WTC11 (cell line): ENCODE measurements at regions of chr3 and their contacts with region 1.

Region 1: DNA sequence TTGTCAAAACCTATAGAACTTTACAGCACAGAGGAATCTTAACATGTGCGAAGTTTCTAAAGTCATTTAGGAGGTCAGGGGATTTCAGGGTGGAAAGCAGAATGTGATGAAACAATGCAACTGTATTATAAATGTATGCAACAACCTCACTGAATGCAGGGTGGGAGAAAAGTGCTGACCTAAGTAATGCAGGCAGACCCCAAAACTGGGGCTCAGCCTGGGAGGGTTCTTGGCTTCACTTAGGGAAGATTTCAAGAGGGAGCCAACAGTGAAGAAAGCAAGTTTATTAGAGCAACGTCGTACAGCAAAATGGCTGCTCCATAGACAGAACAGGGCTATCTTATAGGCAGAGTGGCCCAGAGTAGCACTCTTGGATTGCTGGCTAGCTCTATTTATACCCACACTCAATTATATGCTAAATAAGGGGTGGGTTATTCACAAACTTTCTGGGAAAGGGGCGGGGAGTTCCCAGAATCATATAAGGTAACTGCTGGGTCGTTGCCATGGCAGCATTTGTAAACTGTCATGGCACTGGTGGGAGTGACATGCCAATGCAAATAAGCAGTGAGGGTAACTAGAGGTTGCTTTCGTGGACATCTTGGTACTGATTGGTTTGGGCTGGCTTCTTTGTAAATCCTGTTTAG is 14.2 kb upstream of the CAND2 start:
- DNase-seq: peak; percentile 61
- ATAC-seq: peak; percentile 93
- H3K4me3 Mint-ChIP-seq: no peak overlapping the region
- H3K27ac Mint-ChIP-seq: no peak overlapping the region
- H3K4me1 Mint-ChIP-seq: peaks cover 22% of the 10 kb centered on the region
- H3K27me3 Mint-ChIP-seq: no peaks in the 10 kb centered on the region; the same call in none of the 2 replicates
- CTCF ChIP-seq: no peak

Region 2: GRCh38 chr3:12536423-12536822 is 245.9 kb before region 1 on chr3:
- CTCF ChIA-PET with region 1: no interaction called
- POLR2A ChIA-PET with region 1: no interaction called
- DNase-seq: no peak
- ATAC-seq: no peak
- H3K4me3 Mint-ChIP-seq: no peak overlapping the region
- H3K27ac Mint-ChIP-seq: no peak overlapping the region
- H3K4me1 Mint-ChIP-seq: 0 out of 2 replicates have a peak, but pooled peaks cover 3% of the 10 kb centered on the region
- H3K27me3 Mint-ChIP-seq: no peaks in the 10 kb centered on the region
- CTCF ChIP-seq: no peak

Region 3: DNA sequence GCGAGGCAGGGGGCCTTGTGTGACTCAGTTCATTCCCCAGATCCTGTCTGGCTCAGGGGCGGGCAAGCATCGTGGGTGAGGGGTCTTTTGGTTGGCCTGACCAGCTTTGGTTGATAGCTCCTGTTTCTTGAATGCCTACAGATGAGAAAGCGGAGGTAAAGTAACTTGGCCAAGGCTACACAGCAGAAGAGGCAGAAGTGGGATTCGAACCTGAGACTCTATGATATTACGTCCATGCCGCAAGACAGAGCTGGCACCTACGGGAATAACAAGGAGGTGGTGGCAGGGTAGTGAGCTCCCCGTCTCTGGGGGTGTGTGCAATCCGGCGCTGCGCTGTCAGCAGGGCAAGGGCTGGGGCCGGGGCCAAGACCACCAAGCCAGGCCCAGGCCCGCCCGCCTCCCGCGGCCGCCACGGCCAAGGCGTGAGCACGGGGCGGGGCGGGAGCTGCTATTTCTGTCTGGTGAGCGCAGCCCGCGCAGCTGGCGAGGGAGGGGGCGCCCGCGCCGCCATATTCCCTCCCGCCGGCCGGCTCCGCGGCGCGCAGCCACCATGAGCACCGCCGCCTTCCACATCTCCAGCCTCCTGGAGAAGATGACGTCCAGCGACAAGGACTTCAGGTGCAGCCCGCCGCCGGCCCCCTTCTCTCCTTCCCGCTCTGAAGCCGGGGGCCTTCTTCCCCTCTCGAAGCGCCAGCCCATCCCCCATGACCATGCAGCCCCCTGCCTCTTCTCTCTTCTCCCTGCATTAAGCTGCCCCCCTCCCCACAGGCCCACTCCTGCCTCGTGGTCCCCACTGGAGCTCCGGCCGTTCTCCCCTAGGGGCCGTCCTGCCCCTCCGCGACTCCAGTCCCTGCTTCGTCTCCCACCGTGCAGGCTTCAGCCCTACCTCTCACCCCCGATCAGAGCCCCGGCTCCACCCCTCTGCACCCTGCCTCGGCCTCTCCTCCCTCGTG is 14.2 kb after region 1 on chr3 and contains the start of gene CAND2:
- CTCF ChIA-PET with region 1: interaction called, 16 read pairs
- POLR2A ChIA-PET with region 1: no interaction called
- DNase-seq: peak; percentile 48
- ATAC-seq: peak; percentile 85
- H3K4me3 Mint-ChIP-seq: peak within 1 kb of the TSS; percentile 83
- H3K27ac Mint-ChIP-seq: no peak within 1 kb of the TSS
- H3K4me1 Mint-ChIP-seq: peaks cover 20% of the 10 kb centered on the region
- H3K27me3 Mint-ChIP-seq: no peaks in the 10 kb centered on the region; the same call in 1 of the 2 replicates
- CTCF ChIP-seq: no peak
- total RNA-seq, gene CAND2: 13.7 to 15.4 TPM (median 14.3 TPM) in 3 replicates